OCI-LY7 (cell line): ENCODE measurements at regions of chr4 and their contacts with region 1.

Region 1: DNA sequence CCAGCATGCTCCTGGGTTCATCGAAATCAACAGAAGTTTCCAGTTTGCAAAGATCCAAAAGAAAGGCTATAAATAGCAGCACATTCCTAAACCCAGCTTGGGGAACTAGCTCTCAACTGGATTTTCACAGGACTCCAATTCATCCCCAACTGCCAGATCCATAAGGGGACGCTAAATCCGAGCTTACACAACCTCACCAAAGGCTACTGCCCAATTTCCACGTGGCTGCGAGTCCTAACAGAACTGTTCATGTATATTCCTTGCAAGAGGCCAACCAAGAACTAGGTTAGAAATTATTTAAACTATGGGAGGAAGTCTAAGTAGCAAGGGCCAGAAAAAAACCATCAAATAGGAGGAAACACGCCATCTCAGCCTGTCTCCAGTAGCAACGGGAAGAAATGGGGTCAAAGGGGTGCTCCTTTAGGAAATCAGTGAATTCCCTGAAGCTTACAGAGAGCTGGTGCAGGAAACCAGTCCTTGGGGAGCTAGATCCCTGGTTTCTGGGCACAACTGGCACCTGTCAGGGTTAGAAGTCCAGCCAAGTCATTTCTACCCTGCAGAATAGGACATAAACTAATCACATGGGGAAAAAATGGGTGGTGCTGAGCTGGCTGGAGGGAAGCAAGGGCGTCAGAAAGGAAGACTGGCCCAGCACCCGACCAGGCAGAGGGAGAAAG is 20.7 kb downstream of the RELL1 start:
- DNase-seq: no peak
- H3K4me3 ChIP-seq: no peak overlapping the region
- H3K27ac ChIP-seq: no peak overlapping the region
- H3K4me1 ChIP-seq: peaks cover 13% of the 10 kb centered on the region
- CTCF ChIP-seq: no peak

Region 2: DNA sequence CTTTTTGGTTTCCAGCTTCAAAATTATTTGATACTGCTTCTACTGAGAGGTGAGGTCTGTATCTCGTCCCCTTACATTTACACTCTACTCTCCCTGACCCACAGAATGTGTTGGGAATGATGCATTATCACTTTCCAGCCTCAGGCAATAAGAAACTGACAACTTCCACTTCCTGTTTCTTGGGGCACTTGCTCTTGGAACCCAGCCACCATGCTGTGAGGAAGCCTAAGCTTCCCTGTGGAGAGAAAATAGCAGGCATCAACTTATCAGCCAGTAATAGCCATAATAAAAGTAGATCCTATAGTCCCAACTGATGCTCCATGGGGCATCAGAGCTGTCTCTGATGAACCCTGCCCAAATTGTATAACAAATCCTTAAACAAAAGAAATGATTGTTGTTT is 11.9 kb before region 1 on chr4:
- CTCF ChIA-PET with region 1: interaction called, 3 read pairs
- POLR2A ChIA-PET with region 1: interaction called, 18 read pairs
- intact Hi-C with region 1: no loop called
- DNase-seq: no peak
- H3K4me3 ChIP-seq: no peak overlapping the region
- H3K27ac ChIP-seq: no peak overlapping the region
- H3K4me1 ChIP-seq: peaks cover 8% of the 10 kb centered on the region
- CTCF ChIP-seq: no peak